ENCODE measurements at regions of chr2 and their contacts with region 1.

Region 1: GRCh38 chr2:44044281-44044720 is 48.5 kb upstream of the LRPPRC start:
- DNase-seq: peak; percentile 91
- ATAC-seq: peak; percentile 100
- H3K4me3 ChIP-seq: no peak overlapping the region
- H3K27ac ChIP-seq: peak overlapping the region; percentile 67 to 87
- H3K4me1 ChIP-seq: peaks cover 4% of the 10 kb centered on the region
- CTCF ChIP-seq: peak; percentile 98
- EP300 ChIP-seq: no peak
- POLR2A ChIP-seq: no peak
- RAD21 ChIP-seq: peak; percentile 98

Region 2: GRCh38 chr2:43542285-43542937 is 501.9 kb before region 1 on chr2:
- CTCF ChIA-PET with region 1: no interaction called
- POLR2A ChIA-PET with region 1: no interaction called
- DNase-seq: peak; percentile 28 to 55
- ATAC-seq: peak; percentile 56 to 71; a peak in 3 of 6 replicates
- H3K4me3 ChIP-seq: no peak overlapping the region
- H3K27ac ChIP-seq: peak overlapping the region in 1 of 2 experiments; percentile 63; a peak in 1 of 6 replicates
- H3K4me1 ChIP-seq: peaks cover 29% of the 10 kb centered on the region
- CTCF ChIP-seq: peak; percentile 81
- EP300 ChIP-seq: no peak
- POLR2A ChIP-seq: no peak
- RAD21 ChIP-seq: peak; percentile 77 to 86

Region 3: DNA sequence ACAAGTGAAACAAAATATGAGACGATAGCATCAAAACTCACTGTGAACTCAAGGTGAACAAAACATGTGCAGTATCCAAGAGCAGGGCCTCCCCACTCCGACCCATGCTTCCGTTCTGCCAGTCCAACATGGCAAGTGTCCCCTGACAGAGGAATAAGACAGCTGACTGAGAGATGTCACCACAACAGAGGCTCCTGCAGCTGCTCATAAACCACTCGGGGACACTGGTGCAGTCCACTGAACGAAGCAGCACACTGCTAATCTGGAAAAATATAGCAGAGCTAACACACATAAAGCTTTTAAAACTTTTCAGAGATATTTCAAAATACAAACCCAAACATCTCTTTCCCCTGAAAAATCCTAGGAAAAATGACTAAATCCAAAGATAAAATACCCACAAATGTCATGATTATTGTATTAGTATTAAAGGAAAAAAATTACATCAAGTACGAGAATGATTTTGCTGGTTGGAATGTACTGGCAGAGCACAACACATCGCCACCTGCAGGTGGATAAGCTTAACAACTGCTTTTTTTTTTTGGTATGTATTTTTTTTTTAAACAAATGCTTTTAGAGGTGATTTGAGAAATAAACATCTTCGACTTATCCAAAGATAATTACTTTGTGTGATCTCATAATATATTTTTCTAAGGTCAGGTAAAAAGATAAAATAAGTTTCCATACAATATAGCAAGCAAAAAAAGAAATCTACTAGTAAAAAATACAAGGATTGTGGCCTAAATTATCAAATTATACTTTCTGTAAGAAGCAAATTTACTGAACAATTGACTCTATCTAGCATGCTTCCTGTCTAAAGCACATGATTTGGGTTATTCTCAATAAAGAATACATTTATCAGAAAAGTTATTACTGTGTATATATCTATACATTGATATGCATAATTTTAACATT is 467.1 kb before region 1 on chr2:
- CTCF ChIA-PET with region 1: no interaction called
- POLR2A ChIA-PET with region 1: no interaction called
- DNase-seq: peak; percentile 46 to 77
- ATAC-seq: peak; percentile 59 to 67; a peak in 5 of 6 replicates
- H3K4me3 ChIP-seq: no peak overlapping the region
- H3K27ac ChIP-seq: 0 out of 6 replicates have a peak overlapping the region, but pooled peaks of 1 of the 2 experiments have one; percentile 14
- H3K4me1 ChIP-seq: no peaks in the 10 kb centered on the region
- CTCF ChIP-seq: peak; percentile 93
- EP300 ChIP-seq: no peak
- POLR2A ChIP-seq: no peak
- RAD21 ChIP-seq: peak; percentile 37 to 47; a peak in 4 of 5 replicates

Region 4: GRCh38 chr2:44061876-44062275 is 17.6 kb after region 1 on chr2:
- CTCF ChIA-PET with region 1: interaction called, 65 read pairs
- POLR2A ChIA-PET with region 1: no interaction called
- DNase-seq: peak in 1 of 2 experiments; percentile 26
- ATAC-seq: peak; percentile 69 to 73; a peak in 4 of 6 replicates
- H3K4me3 ChIP-seq: no peak overlapping the region
- H3K27ac ChIP-seq: peak overlapping the region; percentile 23 to 57; a peak in 1 of 6 replicates
- H3K4me1 ChIP-seq: peaks cover 24% of the 10 kb centered on the region
- CTCF ChIP-seq: no peak
- EP300 ChIP-seq: no peak
- POLR2A ChIP-seq: no peak
- RAD21 ChIP-seq: no peak

Region 5: GRCh38 chr2:44087036-44087713 is 42.9 kb after region 1 on chr2:
- CTCF ChIA-PET with region 1: interaction called, 22 read pairs
- POLR2A ChIA-PET with region 1: no interaction called
- DNase-seq: peak; percentile 79 to 87
- ATAC-seq: peak; percentile 93 to 97
- H3K4me3 ChIP-seq: peak overlapping the region; percentile 36
- H3K27ac ChIP-seq: peak overlapping the region; percentile 70 to 86
- H3K4me1 ChIP-seq: peaks cover 14% of the 10 kb centered on the region
- CTCF ChIP-seq: peak; percentile 98
- EP300 ChIP-seq: no peak
- POLR2A ChIP-seq: no peak
- RAD21 ChIP-seq: peak; percentile 99

Region 6: DNA sequence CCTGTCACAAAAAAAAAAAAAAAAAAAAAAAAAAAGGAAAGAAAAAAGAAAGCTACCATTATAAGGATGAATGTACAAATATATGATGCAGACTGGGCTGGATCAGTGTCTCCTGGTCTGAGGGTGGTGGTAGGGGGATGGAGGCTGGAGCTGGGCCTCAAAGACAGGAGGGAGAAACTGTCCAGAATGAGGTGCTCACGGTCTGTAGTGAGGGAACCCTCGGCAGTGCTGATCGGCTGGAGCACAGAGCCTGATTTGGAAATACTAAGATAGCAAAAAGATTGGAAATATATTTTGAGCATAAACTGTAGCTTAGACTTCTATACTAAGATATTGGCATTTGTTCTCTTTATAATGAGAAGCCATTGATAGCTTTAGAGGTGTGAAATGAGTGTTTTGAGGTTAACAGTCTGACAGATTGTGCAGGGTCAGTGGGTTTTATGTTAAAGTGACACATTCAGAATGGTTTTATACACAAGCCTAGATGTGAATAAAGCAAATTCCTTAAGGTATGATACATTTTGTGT is 223.0 kb after region 1 on chr2:
- CTCF ChIA-PET with region 1: no interaction called
- POLR2A ChIA-PET with region 1: no interaction called
- DNase-seq: no peak
- ATAC-seq: peak; percentile 47 to 65; a peak in 5 of 6 replicates
- H3K4me3 ChIP-seq: no peak overlapping the region
- H3K27ac ChIP-seq: peak overlapping the region; percentile 31 to 64; a peak in 4 of 6 replicates
- H3K4me1 ChIP-seq: peaks cover 25% of the 10 kb centered on the region
- CTCF ChIP-seq: no peak
- EP300 ChIP-seq: no peak
- POLR2A ChIP-seq: no peak
- RAD21 ChIP-seq: 0 out of 5 replicates have a peak, but pooled peaks of 1 of the 2 experiments have one; percentile 15

Region 7: DNA sequence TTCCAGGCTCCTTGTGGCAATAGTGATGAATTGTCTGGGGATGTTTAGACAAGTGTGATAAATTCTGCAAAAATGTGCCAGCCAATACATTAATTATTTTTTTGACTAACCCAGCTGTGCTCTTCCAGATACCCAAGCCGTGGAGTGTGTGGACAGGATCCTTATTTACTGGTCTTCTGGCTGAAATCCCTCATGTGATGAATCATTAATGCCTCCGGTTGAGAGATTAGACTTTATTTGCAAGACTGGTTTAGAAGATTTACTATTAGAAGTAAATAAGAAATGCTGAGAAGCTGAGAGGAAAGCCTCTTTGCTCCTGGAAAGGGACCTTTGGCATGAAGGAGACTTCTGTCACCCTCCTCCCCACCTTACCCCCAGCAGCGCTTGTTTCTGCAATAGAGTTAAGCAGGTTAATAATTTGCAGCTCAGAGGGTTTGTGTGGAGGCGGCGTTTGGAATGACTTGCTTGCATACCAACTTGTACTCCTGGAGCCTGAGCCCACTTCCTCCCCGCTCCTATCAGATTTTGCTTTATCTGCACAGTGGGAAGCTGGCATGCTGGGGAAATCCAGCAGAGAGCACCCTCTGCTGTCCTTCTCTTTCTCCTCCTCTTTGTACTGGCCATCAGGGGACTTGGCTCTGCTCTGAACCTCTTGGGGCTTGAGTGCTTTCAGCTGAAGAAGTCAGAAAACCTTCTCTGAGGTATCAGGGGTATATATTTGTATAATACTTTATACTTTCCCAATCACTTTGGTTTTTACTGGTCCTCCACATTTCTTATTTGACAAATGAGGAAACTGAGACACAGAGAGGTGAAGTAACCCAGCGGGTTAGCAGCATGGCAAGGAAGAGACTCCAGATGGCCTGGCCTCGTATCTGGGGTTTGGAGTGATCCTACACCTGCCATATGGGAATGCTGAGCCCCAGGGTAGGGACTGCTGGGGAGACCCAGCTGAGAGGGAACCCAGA is 247.3 kb after region 1 on chr2:
- CTCF ChIA-PET with region 1: interaction called, 22 read pairs
- POLR2A ChIA-PET with region 1: no interaction called
- DNase-seq: peak; percentile 81 to 99
- ATAC-seq: peak; percentile 93
- H3K4me3 ChIP-seq: peak overlapping the region; percentile 16; the same call in 1 of the 3 replicates
- H3K27ac ChIP-seq: peak overlapping the region; percentile 92 to 96
- H3K4me1 ChIP-seq: peaks cover 69% of the 10 kb centered on the region
- CTCF ChIP-seq: peak; percentile 98
- EP300 ChIP-seq: peak; percentile 91 to 93
- POLR2A ChIP-seq: no peak
- RAD21 ChIP-seq: peak; percentile 99

Region 8: DNA sequence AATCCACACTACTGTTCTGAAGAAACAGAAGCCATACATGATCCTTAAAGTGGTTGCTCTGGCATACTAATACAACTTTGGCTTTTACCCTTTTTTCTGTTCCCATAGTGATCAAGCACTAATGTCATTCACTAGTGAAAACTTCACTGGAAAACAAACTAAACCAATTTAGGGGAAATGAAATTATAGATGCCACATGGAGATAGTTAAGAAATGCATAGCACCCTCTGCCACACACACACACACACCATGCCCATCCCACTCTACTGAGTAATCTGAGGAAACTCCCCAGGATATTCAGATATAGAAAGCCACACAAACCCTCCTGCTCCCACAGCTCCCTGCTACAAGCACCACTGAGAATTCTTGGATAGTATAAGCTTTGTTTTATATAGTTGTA is 270.1 kb after region 1 on chr2:
- CTCF ChIA-PET with region 1: interaction called, 11 read pairs
- POLR2A ChIA-PET with region 1: no interaction called
- DNase-seq: no peak
- ATAC-seq: no peak
- H3K4me3 ChIP-seq: no peak overlapping the region
- H3K27ac ChIP-seq: no peak overlapping the region
- H3K4me1 ChIP-seq: no peaks in the 10 kb centered on the region
- CTCF ChIP-seq: no peak
- EP300 ChIP-seq: no peak
- POLR2A ChIP-seq: no peak
- RAD21 ChIP-seq: no peak

Region 9: DNA sequence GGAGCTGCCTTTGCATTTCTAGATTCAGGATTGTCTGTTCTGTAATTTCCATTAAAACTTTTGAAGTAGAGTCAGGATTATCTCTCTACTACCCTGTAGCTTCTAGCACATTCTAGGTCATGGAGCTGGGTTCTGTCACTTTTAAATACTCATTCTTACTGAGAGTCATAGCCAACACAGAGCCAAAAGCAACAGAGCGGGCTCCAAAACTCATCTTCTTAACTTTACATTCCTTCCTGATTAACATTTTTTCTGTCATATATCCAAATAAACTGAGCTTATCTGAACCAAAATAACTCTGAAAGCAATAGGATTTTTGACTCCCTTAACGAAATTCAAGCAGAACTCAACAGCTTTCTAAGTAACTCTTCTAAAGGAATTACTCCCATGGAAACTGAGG is 304.1 kb after region 1 on chr2:
- CTCF ChIA-PET with region 1: interaction called, 22 read pairs
- POLR2A ChIA-PET with region 1: no interaction called
- DNase-seq: no peak
- ATAC-seq: no peak
- H3K4me3 ChIP-seq: no peak overlapping the region
- H3K27ac ChIP-seq: no peak overlapping the region
- H3K4me1 ChIP-seq: no peaks in the 10 kb centered on the region
- CTCF ChIP-seq: no peak
- EP300 ChIP-seq: no peak
- POLR2A ChIP-seq: no peak
- RAD21 ChIP-seq: no peak

Region 10: GRCh38 chr2:44392338-44392943 is 348.1 kb after region 1 on chr2:
- CTCF ChIA-PET with region 1: interaction called, 39 read pairs
- POLR2A ChIA-PET with region 1: no interaction called
- DNase-seq: peak; percentile 21 to 35
- ATAC-seq: no peak
- H3K4me3 ChIP-seq: no peak overlapping the region
- H3K27ac ChIP-seq: no peak overlapping the region
- H3K4me1 ChIP-seq: no peaks in the 10 kb centered on the region
- CTCF ChIP-seq: peak; percentile 95
- EP300 ChIP-seq: no peak
- POLR2A ChIP-seq: no peak
- RAD21 ChIP-seq: peak; percentile 75 to 82

Region 11: GRCh38 chr2:44786045-44786817 is 741.9 kb after region 1 on chr2:
- CTCF ChIA-PET with region 1: no interaction called
- POLR2A ChIA-PET with region 1: no interaction called
- DNase-seq: no peak
- ATAC-seq: no peak
- H3K4me3 ChIP-seq: no peak overlapping the region
- H3K27ac ChIP-seq: no peak overlapping the region
- H3K4me1 ChIP-seq: no peaks in the 10 kb centered on the region
- CTCF ChIP-seq: no peak
- EP300 ChIP-seq: no peak
- POLR2A ChIP-seq: no peak
- RAD21 ChIP-seq: no peak

Measured in A549 (cell line).